ENCODE measurements at regions of chr3 and their contacts with region 1.

Region 1: DNA sequence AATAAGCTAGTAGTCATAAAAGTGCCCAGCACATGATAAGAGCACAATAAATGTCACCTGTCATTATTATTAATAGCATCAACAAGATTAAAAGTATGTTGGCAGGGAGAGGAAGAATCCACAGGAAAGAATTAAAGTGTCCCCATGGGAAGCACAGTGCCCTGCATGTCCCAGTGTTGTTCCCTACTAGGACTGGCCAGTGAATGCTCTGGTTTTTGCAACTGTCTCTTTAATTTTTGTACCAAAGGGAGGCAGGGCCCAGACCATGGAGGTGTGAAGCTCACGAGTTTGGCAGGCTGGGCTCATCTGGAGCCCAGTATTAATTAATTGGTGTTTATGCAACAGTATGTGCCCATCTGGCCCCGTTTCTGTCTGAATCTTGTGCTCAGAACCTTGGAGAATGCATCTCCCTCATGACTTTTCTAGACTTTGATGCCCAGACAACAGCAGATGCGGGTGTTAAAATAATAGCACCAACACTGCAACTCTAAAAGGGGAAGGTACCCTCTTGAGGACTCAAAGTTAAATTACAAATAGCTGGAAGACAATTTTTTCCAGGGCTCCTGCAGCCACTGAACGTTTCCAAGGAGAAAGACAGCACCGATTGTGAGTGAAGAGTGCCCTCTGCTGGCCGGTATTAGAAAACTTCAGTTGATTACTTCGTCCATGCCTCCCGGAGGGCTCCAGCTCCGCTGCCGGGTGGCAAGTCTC is 71.9 kb upstream of the SPATA12 start:
- DNase-seq: peak; percentile 87
- H3K4me3 ChIP-seq: no peak overlapping the region
- H3K27ac ChIP-seq: no peak overlapping the region
- H3K4me1 ChIP-seq: no peaks in the 10 kb centered on the region
- H3K27me3 ChIP-seq: peaks cover 0 to 2% of the 10 kb centered on the region in 2 experiments
- CTCF ChIP-seq: peak; percentile 61 to 62
- POLR2A ChIP-seq: no peak

Region 2: DNA sequence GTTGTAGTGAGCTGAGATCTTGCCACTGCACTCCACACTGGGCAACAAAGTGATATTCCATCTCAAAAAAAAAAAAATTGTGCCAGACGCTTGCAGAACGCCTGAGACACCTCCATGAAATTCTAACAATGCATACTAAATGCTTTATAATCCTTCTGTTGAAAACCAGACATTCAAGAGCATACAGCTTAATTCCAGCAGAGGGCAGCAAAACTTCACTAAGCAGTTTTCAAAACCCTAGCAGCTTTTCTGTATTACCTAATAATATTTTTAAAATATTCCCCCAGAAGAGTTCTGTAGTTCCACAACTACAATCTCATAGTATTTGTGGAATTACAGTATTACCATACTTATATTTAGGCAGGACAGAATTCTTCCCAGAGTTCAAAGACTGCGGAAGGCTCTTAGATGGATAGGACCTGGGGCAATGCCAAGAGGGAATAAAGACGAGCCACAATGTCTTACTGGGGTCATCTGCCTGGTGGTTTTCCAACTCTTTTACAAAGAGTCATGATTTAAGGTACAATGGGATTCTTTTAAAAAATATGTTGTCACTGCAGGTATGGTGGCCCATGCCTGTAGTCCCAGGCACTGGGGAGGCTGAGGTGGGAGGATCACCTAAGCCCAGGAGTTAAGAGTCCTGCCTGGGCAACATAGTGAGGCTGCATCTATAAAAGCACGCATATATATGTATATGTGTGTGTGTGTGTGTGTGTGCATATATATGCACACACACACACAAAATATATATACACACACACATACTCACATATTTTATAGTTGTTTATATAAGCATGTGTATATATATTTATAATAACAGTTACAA is 285.9 kb before region 1 on chr3:
- CTCF ChIA-PET with region 1: interaction called, 246 read pairs
- POLR2A ChIA-PET with region 1: no interaction called
- dilution Hi-C with region 1: no loop called
- intact Hi-C with region 1: loop called (anchors 1 kb)
- DNase-seq: peak; percentile 66
- H3K4me3 ChIP-seq: no peak overlapping the region
- H3K27ac ChIP-seq: no peak overlapping the region
- H3K4me1 ChIP-seq: no peaks in the 10 kb centered on the region
- H3K27me3 ChIP-seq: no peaks in the 10 kb centered on the region
- CTCF ChIP-seq: peak; percentile 56 to 61
- POLR2A ChIP-seq: no peak

Region 3: DNA sequence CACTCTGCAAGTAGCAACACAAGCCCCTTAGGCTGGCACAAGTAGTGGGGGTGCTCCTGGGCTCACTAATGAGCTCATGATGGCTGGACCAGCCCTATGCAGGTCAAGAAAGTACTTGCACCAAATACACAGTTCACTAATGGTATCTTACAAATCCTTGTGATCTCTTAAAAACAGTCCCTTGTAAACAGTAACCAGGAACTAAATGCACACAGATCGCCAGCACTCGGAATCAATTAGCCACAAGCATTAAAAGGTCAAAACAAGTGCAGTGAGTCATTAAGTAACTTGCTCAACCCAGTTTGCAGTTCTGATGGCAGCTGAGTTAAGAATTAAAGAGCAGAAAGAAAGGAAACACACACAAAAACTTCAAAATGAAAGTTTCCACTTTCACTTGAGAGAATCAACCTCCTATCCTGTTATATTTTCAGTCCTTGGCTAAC is 230.1 kb before region 1 on chr3:
- CTCF ChIA-PET with region 1: interaction called, 16 read pairs
- POLR2A ChIA-PET with region 1: no interaction called
- dilution Hi-C with region 1: no loop called
- intact Hi-C with region 1: loop called (anchors 5 kb)
- DNase-seq: peak; percentile 87
- H3K4me3 ChIP-seq: no peak overlapping the region
- H3K27ac ChIP-seq: peak overlapping the region; percentile 35
- H3K4me1 ChIP-seq: peaks cover 29% of the 10 kb centered on the region
- H3K27me3 ChIP-seq: no peaks in the 10 kb centered on the region
- CTCF ChIP-seq: no peak
- POLR2A ChIP-seq: no peak

Region 4: DNA sequence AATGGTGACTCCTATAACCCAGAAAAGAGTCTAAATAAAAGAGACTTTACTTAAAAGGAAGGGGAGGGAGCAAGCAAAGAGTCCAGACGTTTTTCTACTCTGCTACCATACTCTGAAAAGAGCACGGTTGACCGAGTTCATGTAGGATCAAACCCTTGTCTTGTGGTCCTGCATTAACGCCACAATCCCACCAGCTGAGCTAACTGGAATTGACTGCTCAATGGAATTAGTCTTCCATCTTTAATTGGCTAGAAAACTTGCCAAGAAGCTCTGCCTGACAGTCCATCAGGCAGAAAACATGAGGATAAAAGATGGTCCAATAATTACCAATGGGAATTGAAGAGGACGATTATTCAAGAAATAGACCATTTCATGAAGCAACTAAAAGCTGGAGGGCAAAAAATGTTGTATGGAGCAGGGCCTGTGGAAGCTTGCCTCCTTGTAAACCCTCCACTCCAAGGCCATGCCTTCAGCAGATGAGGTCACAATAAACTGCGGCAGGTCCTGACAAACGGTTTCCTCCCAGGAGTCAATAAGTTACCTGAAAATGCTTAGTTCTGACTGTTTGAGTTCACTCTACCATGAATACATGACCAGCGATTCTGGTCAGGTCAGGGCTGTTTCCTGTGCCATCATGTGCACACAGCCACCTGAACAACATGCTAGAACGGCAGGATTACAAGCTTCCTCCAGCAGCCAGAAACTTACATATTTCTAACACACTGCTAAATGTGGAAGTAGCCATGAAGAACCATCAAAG is 151.2 kb before region 1 on chr3:
- CTCF ChIA-PET with region 1: interaction called, 16 read pairs
- POLR2A ChIA-PET with region 1: no interaction called
- dilution Hi-C with region 1: no loop called
- intact Hi-C with region 1: no loop called
- DNase-seq: no peak
- H3K4me3 ChIP-seq: no peak overlapping the region
- H3K27ac ChIP-seq: no peak overlapping the region
- H3K4me1 ChIP-seq: peaks cover 12% of the 10 kb centered on the region
- H3K27me3 ChIP-seq: no peaks in the 10 kb centered on the region
- CTCF ChIP-seq: no peak
- POLR2A ChIP-seq: no peak

Region 5: GRCh38 chr3:56957522-56957921 is 31.1 kb before region 1 on chr3:
- CTCF ChIA-PET with region 1: interaction called, 10 read pairs
- POLR2A ChIA-PET with region 1: no interaction called
- dilution Hi-C with region 1: no loop called
- intact Hi-C with region 1: no loop called
- DNase-seq: no peak
- H3K4me3 ChIP-seq: no peak overlapping the region
- H3K27ac ChIP-seq: no peak overlapping the region
- H3K4me1 ChIP-seq: no peaks in the 10 kb centered on the region
- H3K27me3 ChIP-seq: no peaks in the 10 kb centered on the region
- CTCF ChIP-seq: no peak
- POLR2A ChIP-seq: no peak